ENCODE measurements at regions of chr10 and their contacts with region 1.

Region 1: DNA sequence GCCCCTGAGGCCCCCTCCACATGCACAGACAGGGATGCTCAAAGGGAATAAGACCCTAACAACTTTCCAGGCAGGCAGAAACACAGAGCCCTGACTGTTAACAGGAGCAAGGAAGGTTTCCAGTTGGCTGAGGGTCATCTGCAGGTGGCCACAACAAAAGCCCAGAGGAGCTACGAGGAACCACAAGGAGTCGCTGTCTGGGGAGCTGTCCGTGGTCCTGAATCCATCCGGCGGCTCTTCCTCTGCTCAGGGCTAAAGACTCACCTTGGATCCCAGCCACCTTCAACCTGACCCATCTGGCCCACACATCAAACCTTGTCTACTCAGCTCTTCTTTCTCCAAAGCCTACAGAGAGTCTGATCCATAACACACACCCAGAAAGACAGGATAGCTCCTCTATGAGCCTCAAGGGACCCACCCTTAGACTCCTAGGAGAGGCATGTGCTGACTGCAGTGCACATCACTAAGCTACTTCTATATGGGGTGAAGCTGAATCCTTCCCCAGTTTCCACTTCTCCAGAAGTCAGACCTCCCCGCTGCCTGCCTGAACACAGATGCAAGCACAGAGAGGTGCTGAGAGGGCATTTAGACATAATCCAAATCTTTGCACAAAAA is 104.0 kb downstream of the SLIT1 start:
- DNase-seq: peak; percentile 85
- ATAC-seq: peak; percentile 63
- H3K4me3 Mint-ChIP-seq: no peak overlapping the region
- H3K27ac Mint-ChIP-seq: no peak overlapping the region
- H3K4me1 Mint-ChIP-seq: peaks cover 24% of the 10 kb centered on the region
- H3K27me3 Mint-ChIP-seq: no peaks in the 10 kb centered on the region
- CTCF ChIP-seq: peak; percentile 45; the same call in 1 of the 2 replicates

Region 2: GRCh38 chr10:97059006-97059871 is 22.5 kb before region 1 on chr10:
- CTCF ChIA-PET with region 1: interaction called, 10 read pairs
- POLR2A ChIA-PET with region 1: no interaction called
- DNase-seq: peak; percentile 66
- ATAC-seq: peak; percentile 89
- H3K4me3 Mint-ChIP-seq: no peak overlapping the region
- H3K27ac Mint-ChIP-seq: no peak overlapping the region
- H3K4me1 Mint-ChIP-seq: peaks cover 8% of the 10 kb centered on the region
- H3K27me3 Mint-ChIP-seq: no peaks in the 10 kb centered on the region
- CTCF ChIP-seq: no peak

Region 3: DNA sequence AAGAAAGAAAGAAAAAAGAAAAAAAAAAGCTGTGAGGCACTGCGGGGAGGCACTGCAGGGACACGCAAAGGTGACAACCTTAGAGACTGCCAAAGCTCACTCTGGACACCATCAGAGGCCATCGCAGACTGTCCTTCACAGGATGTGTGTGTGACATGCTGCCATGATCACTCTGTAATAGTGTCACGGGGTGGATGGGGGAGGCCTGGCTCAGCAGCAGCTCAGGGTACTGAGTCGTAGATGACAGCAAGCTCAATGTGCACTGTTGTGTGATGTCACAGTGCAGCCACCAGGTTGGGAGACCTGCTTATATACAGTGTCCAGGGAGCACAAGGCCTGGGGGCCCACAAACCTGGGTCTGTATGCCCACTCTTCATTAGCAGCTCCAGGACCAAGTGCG is 20.7 kb after region 1 on chr10:
- CTCF ChIA-PET with region 1: interaction called, 16 read pairs
- POLR2A ChIA-PET with region 1: interaction called, 4 read pairs
- DNase-seq: no peak
- ATAC-seq: no peak
- H3K4me3 Mint-ChIP-seq: no peak overlapping the region
- H3K27ac Mint-ChIP-seq: no peak overlapping the region
- H3K4me1 Mint-ChIP-seq: peaks cover 25% of the 10 kb centered on the region
- H3K27me3 Mint-ChIP-seq: no peaks in the 10 kb centered on the region
- CTCF ChIP-seq: no peak

Region 4: GRCh38 chr10:97117372-97117771 is 35.6 kb after region 1 on chr10:
- CTCF ChIA-PET with region 1: interaction called, 20 read pairs
- POLR2A ChIA-PET with region 1: no interaction called
- DNase-seq: no peak
- ATAC-seq: 0 out of 2 replicates have a peak, but pooled peaks have one; percentile 27
- H3K4me3 Mint-ChIP-seq: no peak overlapping the region
- H3K27ac Mint-ChIP-seq: no peak overlapping the region
- H3K4me1 Mint-ChIP-seq: peaks cover 8% of the 10 kb centered on the region
- H3K27me3 Mint-ChIP-seq: no peaks in the 10 kb centered on the region; the same call in 1 of the 2 replicates
- CTCF ChIP-seq: no peak

Region 5: GRCh38 chr10:97138174-97138573 is 56.4 kb after region 1 on chr10:
- CTCF ChIA-PET with region 1: interaction called, 13 read pairs
- POLR2A ChIA-PET with region 1: no interaction called
- DNase-seq: peak; percentile 60
- ATAC-seq: peak; percentile 74
- H3K4me3 Mint-ChIP-seq: no peak overlapping the region
- H3K27ac Mint-ChIP-seq: no peak overlapping the region
- H3K4me1 Mint-ChIP-seq: peaks cover 22% of the 10 kb centered on the region
- H3K27me3 Mint-ChIP-seq: no peaks in the 10 kb centered on the region; the same call in 1 of the 2 replicates
- CTCF ChIP-seq: no peak; the same call in 1 of the 2 replicates

Region 6: DNA sequence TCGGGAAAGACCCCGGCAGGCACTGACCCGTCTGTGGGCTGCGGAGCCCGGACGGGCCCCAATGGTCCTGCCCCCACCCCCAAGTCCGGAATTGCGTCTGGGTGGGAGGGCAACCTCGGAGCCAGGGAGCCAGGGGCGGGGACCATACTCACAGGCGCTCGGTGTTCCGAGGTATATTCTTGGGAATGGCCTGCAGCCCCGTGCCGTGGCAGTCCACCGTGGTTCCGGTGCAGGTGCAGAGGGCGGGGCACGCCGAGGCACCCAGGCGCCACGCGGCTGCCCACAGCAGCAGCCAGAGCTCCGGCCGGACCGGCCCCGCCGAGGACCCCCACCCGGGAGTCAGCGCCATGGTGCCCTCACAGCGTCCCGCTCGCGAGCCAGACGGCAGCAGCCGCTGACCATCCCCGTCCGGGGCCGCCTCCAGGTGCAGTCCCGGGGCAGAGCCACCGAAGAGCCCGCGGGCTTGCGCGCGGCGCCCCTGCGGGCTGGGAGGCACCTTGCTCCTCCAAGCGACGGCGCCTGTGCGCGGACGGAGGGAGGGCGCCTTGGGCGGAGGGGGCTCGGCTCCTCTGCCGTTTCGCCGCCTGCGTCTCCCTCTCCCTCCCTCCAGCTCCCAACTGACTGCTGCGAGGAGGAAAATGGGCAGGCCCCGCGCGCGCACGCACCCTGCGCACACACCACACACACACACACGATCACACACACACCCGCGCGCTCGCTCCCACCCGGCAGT is 103.8 kb after region 1 on chr10 and contains the start of gene SLIT1:
- CTCF ChIA-PET with region 1: interaction called, 17 read pairs
- POLR2A ChIA-PET with region 1: no interaction called
- DNase-seq: peak; percentile 61
- ATAC-seq: peak; percentile 71
- H3K4me3 Mint-ChIP-seq: peak within 1 kb of the TSS; percentile 81
- H3K27ac Mint-ChIP-seq: no peak within 1 kb of the TSS
- H3K4me1 Mint-ChIP-seq: peaks cover 20% of the 10 kb centered on the region
- H3K27me3 Mint-ChIP-seq: peaks cover 67% of the 10 kb centered on the region
- CTCF ChIP-seq: no peak
- total RNA-seq, gene SLIT1: 1.1 to 1.6 TPM (median 1.4 TPM) in 3 replicates

Region 7: GRCh38 chr10:97234400-97234799 is 152.7 kb after region 1 on chr10:
- CTCF ChIA-PET with region 1: no interaction called
- POLR2A ChIA-PET with region 1: no interaction called
- DNase-seq: no peak
- ATAC-seq: no peak
- H3K4me3 Mint-ChIP-seq: no peak overlapping the region
- H3K27ac Mint-ChIP-seq: no peak overlapping the region
- H3K4me1 Mint-ChIP-seq: no peaks in the 10 kb centered on the region
- H3K27me3 Mint-ChIP-seq: no peaks in the 10 kb centered on the region
- CTCF ChIP-seq: peak; percentile 42; the same call in 1 of the 2 replicates